ENCODE measurements at regions of chr18 and their contacts with region 1.

Region 1: GRCh38 chr18:62186774-62187542 is at the starts of genes PIGN and RELCH:
- DNase-seq: peak; percentile 94
- H3K4me3 Mint-ChIP-seq: peak within 1 kb of the TSS; percentile 97
- H3K27ac Mint-ChIP-seq: peak within 1 kb of the TSS; percentile 92
- H3K4me1 Mint-ChIP-seq: peaks cover 42% of the 10 kb centered on the region
- H3K27me3 Mint-ChIP-seq: no peaks in the 10 kb centered on the region
- total RNA-seq, gene PIGN: 29.4 and 29.6 TPM in 2 replicates
- total RNA-seq, gene RELCH: 29.1 and 32.3 TPM in 2 replicates

Region 2: GRCh38 chr18:62249478-62250097 is 62.6 kb after region 1 on chr18:
- intact Hi-C with region 1: loop called (anchors 1 kb)
- DNase-seq: peak; percentile 52
- H3K4me3 Mint-ChIP-seq: no peak overlapping the region
- H3K27ac Mint-ChIP-seq: no peak overlapping the region
- H3K4me1 Mint-ChIP-seq: no peaks in the 10 kb centered on the region
- H3K27me3 Mint-ChIP-seq: no peaks in the 10 kb centered on the region

Region 3: DNA sequence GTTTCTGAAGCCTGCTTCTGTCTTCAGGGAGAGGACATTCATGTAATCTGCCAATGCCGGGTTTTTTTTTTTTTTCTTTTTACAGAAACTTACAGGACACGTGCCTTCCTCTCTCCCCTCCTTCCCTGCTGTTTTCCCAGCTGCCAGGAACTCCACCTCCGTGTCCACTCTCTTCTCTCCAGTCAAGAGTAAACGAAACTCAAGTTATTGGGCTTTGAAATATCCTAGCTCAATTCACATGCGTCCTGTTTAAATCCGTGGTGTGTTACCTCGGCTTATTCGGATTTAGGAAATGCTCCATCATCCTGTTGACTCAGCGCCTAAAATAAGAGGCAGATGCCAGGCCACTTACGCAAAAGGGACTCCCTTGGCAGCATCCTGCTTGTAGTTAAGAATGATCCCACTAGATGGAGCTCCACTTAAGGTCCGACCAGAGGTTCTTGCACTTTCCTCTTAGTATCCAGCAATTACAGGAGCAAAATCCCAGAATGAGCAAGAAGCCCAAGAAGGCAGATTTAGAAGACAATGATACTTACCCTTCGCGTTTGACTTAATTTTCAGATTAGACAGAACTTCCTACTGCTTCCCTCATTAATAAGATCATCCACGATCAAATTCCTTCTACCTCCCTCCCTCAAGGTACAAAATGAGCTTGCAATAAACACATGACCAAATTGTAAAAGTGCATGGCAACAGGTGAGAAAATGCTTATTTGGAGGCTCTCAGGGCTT is 238.7 kb after region 1 on chr18:
- intact Hi-C with region 1: loop called (anchors 2 kb)
- DNase-seq: peak; percentile 55
- H3K4me3 Mint-ChIP-seq: peak overlapping the region; percentile 44
- H3K27ac Mint-ChIP-seq: peak overlapping the region; percentile 72
- H3K4me1 Mint-ChIP-seq: peaks cover 40% of the 10 kb centered on the region
- H3K27me3 Mint-ChIP-seq: no peaks in the 10 kb centered on the region

Region 4: DNA sequence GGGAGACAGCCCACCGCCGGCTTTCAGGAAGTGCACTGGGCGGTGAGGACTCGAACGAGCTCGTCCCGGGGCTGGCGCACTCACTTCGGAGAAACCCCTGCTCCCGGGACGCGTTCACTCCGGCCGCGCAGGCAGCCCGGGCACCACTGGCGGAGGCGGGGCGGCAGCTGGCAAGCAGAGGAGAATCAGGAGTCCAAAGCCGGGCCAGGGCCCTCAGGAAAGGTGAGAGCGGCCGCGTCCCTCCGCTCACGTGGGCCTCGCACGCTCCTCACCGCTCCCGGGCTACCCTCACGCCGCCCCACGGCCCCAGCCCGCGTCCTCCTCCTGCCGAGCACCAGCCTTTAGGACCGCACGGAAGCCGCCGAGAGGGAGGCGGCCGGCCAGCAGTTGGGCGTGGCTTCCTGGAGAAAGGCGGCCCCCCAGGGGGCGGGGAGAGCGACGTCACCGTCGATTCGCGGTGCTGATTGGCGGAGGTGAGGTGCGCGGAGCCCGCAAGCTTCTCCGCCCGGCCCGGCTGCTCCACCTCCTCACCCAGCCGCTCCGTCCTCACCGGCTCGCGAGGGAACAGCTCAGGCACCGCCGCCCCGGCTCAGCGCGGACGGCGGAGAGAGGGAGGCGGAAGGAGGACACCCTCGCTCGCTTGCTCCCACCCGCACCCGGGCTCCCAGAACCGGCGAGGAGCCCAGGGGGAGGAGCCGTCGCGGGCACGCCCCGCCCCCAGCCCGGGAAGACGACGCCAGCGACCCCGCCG is 335.7 kb after region 1 on chr18 and contains the start of gene ZCCHC2:
- intact Hi-C with region 1: loop called (anchors 1 kb)
- DNase-seq: peak; percentile 99
- H3K4me3 Mint-ChIP-seq: peak within 1 kb of the TSS; percentile 95
- H3K27ac Mint-ChIP-seq: peak within 1 kb of the TSS; percentile 88
- H3K4me1 Mint-ChIP-seq: peaks cover 29% of the 10 kb centered on the region
- H3K27me3 Mint-ChIP-seq: no peaks in the 10 kb centered on the region
- total RNA-seq, gene ZCCHC2: 43.8 and 48.6 TPM in 2 replicates

Region 5: DNA sequence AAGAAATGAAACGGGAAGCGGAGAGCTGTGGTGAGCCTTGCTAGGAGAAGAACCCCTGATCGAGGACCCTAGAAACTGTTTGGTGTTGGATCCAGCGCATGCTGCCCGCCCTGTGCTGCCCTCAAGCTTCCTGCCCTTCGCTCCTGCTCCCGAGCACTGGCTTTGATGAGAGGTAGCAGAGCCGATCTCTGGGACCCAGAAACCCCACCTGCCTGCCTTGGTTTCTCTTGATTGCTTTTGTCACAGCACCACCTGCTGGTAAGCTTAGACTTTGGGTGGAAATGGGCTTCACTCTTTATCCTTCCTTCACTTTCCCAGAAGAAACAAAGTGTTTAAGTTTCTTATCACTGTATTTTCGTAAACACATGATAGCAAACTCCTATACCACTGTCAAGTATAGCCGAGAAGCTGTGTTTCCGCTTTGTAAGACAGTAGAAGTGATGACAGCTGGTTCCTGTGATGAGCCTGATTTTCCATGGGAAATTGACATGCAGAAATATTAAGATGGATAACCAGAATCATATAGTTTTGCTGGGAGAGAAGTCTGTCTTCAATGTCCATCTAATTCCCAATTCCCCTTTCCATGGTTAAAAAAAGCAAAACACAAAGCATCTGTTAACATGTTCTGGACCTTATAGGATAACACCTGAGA is 795.8 kb after region 1 on chr18:
- intact Hi-C with region 1: loop called (anchors 5 kb)
- DNase-seq: peak; percentile 42
- H3K4me3 Mint-ChIP-seq: no peak overlapping the region
- H3K27ac Mint-ChIP-seq: no peak overlapping the region
- H3K4me1 Mint-ChIP-seq: peaks cover 4% of the 10 kb centered on the region
- H3K27me3 Mint-ChIP-seq: no peaks in the 10 kb centered on the region

Region 6: DNA sequence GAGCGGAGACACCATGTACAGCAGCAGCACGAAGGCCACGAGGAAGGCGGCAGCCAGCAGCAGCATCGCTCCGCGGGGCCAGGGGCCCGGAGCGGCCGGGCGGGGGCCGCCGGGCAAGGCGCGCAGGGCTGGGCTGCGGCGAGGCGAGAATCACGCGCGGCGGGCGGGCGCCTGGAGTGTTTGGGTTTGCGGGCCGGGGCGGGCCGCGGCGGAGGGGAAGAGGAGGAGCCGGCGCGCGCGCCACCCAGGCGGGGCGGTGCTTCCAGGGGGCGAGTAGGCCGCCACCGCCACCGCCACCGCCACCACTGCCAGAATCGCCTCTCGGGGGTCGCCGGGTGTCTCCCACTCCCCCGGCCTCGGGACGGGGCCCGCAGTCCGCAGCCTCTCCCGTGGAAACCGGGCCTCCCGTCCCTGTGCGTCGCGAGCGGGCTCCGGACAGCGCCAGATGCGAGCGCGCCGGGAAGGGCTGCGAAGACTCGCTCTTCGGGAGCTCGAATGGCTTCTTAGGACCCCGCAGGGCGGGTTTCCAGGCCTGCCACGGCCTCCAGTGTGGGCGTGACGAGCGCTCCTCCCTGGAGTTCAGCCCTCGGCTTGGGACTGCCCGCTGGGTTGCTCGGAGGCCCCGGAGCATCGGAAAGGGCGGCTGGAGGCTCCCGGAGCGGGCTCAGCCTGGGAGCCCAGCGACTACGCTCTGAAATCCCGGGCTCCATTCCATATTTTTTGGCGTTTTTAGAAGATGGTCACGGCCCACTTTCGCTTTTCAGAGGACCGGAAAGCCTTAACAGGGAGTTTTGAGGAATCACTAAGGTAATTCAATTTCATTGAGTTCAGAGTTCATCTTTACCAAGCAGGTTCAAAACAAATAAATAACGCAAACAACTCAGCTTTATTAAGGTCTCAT is 1180.3 kb after region 1 on chr18 and contains the start of gene KDSR:
- intact Hi-C with region 1: loop called (anchors 2 kb)
- DNase-seq: peak; percentile 82
- H3K4me3 Mint-ChIP-seq: peak within 1 kb of the TSS; percentile 94
- H3K27ac Mint-ChIP-seq: peak within 1 kb of the TSS; percentile 84
- H3K4me1 Mint-ChIP-seq: peaks cover 28% of the 10 kb centered on the region
- H3K27me3 Mint-ChIP-seq: no peaks in the 10 kb centered on the region
- total RNA-seq, gene KDSR: 73.3 and 76.1 TPM in 2 replicates

Region 7: DNA sequence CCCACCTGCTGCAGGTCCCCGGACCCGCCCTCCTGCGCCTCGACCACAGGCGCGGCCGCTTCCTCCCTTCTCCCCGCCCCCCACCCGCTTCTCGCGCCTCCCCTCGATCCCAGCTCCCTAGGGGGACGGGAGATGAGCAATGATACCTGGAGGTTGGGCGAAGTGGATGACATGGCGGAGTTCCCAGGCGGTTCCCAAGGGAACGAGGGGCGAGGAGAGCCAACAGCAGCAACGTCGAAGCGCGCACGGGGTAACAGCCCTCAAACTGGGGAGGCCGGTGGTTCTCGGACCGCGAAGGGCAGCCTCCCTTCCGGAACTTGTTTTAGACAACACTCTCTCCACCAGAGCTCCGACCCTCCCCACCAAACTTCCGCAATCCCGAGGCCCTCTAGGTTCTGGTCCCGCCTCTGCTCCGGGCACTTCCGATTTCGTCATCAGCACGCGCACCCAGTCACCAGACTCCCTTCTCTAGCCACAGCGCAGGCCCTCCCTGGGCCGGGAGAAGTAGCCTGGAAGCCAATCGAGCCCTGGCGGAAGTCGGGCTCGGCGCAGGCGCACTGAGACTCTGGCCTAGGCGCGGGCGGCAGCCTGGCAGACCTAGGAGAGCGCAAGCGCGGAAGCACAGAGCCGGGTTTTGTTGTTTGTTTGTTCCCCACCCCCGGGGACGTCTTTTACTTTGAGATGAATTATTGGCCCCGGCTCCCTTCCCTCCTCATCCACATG is 1235.3 kb after region 1 on chr18 and contains the start of gene VPS4B:
- intact Hi-C with region 1: loop called (anchors 1 kb)
- DNase-seq: peak; percentile 100
- H3K4me3 Mint-ChIP-seq: peak within 1 kb of the TSS; percentile 89
- H3K27ac Mint-ChIP-seq: peak within 1 kb of the TSS; percentile 92
- H3K4me1 Mint-ChIP-seq: peaks cover 26% of the 10 kb centered on the region
- H3K27me3 Mint-ChIP-seq: peaks cover 2% of the 10 kb centered on the region
- total RNA-seq, gene VPS4B: 53.8 and 56.1 TPM in 2 replicates